Common myeloid progenitor, CD34-positive (primary cell): ENCODE measurements at regions of chr3 and their contacts with region 1.

Region 1: GRCh38 chr3:146589899-146590508 is 15.1 kb downstream of the PLSCR5 start:
- DNase-seq: peak; percentile 48 to 65 (median 54)
- H3K4me3 ChIP-seq: no peak overlapping the region
- H3K27ac ChIP-seq: no peak overlapping the region
- H3K4me1 ChIP-seq: no peaks in the 10 kb centered on the region
- H3K27me3 ChIP-seq: no peaks in the 10 kb centered on the region

Region 2: GRCh38 chr3:146640955-146641867 is 51.2 kb after region 1 on chr3:
- CTCF ChIA-PET with region 1: interaction called, 26 read pairs
- POLR2A ChIA-PET with region 1: no interaction called
- DNase-seq: peak; percentile 52 to 80 (median 78)
- H3K4me3 ChIP-seq: no peak overlapping the region
- H3K27ac ChIP-seq: no peak overlapping the region
- H3K4me1 ChIP-seq: no peaks in the 10 kb centered on the region
- H3K27me3 ChIP-seq: no peaks in the 10 kb centered on the region

Region 3: GRCh38 chr3:146739203-146739671 is 149.2 kb after region 1 on chr3:
- CTCF ChIA-PET with region 1: no interaction called
- POLR2A ChIA-PET with region 1: no interaction called
- DNase-seq: no peak
- H3K4me3 ChIP-seq: no peak overlapping the region
- H3K27ac ChIP-seq: no peak overlapping the region
- H3K4me1 ChIP-seq: no peaks in the 10 kb centered on the region
- H3K27me3 ChIP-seq: no peaks in the 10 kb centered on the region